BJ (cell line): ENCODE measurements at regions of chr10 and their contacts with region 1.

Region 1: DNA sequence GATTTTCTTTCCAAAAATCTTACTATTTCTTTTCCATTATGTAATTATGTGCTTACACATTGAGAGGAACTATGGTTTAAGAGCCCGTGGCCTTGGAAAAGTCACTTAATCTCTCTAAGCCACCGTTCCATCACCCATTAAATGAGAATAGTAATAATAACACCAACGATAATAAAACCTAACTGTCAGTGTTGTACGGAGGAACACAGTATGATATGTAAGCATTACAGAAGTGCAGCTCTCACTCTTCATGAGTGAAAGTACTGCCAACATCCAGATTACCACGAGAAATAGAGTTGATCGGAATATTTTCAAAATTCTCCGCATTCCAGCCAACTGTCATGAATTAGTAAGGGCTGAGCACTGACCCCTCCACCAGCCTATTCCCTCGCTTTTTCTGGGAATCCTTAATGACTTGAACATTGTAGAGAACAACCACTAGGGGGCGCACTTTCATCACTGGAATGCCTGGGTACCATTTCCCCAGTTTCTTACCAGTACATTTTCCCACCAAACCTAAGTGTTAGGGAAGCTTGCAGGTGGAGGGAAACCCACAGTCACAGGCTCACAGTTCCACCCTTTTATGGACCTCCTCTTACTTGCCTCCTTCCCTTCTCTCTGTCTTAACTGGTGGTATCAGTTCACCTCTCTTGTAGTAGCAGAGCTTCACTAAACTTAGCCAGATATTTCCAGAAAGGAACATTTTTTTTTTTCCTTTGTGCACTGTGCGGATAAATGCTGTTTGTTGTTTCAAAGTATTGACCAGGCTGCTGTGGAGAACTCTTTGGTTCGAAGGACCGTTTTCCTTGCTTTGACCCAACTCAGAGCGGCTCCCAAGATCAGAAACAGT is 27.8 kb downstream of the NKX2-3 start:
- DNase-seq: no peak
- H3K4me3 ChIP-seq: no peak overlapping the region
- H3K27me3 ChIP-seq: peaks cover 13% of the 10 kb centered on the region
- CTCF ChIP-seq: peak; percentile 73

Region 2: DNA sequence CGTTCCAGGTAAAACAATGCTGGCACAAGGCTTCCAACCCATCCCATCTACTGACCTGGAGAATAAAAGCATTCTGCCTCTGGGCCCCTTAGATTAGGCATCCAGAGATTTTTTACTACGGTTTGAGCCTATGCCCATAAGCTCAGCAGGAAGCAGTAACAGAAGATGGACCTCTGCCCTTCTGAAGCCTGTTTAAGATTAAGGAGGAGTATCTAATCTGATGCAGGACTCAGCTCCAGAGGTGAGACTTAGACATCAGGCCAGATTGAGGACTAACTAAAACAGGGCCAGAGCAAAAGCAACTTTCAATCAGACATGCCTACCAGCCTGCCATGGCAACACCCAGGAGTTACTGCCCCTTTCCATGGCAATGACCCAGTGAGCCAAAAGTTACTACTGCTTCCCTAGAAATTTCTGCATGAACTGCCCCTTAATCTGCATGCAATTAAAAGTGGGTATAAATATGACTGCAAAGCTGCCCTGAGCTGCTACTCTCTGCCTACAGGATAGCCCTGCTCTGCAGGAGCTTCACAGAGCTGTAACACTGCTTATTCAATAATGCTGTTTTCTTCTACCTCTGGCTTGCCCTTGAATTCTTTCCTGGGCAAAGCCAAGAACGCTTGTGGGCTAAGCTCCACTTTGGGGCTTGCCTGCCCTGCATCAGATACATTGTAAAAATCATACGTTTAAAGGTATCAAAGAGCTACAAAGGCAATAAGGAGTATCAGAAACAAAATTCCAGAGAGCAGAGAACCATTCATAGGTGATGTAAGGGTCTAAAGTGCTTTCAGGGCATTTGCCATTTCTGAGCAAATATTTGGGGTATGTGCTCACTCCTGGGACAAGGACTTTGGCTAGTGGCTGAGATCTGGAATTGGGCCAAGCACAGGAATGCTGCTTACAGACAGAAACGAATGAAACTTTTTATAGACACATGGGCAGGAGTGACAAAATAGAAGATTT is 256.3 kb before region 1 on chr10:
- CTCF ChIA-PET with region 1: no interaction called
- POLR2A ChIA-PET with region 1: no interaction called
- DNase-seq: peak; percentile 35
- H3K4me3 ChIP-seq: no peak overlapping the region
- H3K27me3 ChIP-seq: no peaks in the 10 kb centered on the region
- CTCF ChIP-seq: no peak

Region 3: GRCh38 chr10:99548041-99548530 is 12.4 kb before region 1 on chr10:
- CTCF ChIA-PET with region 1: interaction called, 45 read pairs
- POLR2A ChIA-PET with region 1: no interaction called
- DNase-seq: no peak
- H3K4me3 ChIP-seq: no peak overlapping the region
- H3K27me3 ChIP-seq: peaks cover 5% of the 10 kb centered on the region
- CTCF ChIP-seq: peak; percentile 36; the same call in 1 of the 2 replicates

Region 4: DNA sequence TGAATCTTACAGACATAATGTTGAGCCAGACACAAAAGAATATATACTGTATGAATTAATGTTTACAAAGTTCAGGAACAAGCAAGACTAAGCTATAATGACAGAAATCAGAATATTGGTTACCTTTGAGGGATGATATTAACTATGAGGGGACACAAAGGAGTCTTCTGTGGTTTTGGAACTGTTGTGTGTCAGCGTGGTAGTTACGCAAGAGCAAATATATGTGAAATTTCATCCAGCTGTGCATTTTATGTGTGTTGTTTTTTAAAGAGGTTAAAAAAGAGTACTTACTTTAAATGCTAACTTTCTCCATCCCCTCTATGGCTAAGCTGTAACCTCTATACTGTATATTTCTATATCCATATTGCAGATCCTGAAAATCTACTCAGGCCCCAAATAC is 44.8 kb after region 1 on chr10:
- CTCF ChIA-PET with region 1: interaction called, 23 read pairs
- POLR2A ChIA-PET with region 1: no interaction called
- DNase-seq: no peak
- H3K4me3 ChIP-seq: no peak overlapping the region
- H3K27me3 ChIP-seq: 0 out of 2 replicates have a peak, but pooled peaks cover 2% of the 10 kb centered on the region
- CTCF ChIP-seq: no peak